ENCODE measurements at regions of chr17 and their contacts with region 1.

Region 1: DNA sequence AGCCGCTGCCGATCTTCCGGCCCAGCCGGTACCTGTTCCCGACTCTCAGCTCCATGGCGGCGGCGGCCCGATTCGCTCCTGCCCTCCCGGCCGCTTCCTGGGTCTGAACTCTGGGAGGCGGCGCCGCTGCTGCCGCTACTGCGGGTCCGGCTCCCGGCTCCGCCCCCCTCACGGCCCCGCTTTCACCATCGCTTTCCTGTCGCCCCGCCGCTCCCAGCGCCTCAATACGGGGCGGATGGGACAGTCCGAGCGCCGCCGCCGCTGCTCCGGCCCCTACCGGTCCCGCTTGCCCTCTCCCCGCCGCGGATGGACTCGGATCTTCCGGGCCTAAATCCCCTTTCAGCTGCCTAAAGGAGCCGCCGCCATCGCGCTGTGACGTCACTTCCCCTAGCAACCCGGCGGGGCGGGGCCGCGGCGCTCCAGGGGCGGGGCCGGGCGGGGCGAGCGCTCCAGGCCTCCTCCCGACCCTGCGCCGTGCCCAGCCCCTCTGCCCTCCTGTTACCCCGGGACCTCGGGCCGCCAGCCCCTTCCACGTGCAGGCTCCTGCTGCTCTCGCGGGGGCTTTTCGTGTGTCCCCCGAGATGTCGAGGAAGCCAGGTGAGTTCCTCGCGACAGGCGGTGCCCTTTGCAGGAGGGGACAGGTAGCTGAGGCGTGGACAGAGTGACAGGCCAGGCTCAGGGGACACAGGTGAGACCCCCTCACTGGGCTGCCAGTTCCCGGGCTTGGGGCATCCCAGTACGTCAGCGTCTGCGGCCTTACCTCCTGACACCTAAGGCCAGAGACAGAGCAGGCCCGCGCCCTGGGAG is at the start of gene CSNK1D:
- DNase-seq: peak; percentile 96
- ATAC-seq: peak; percentile 81
- H3K4me3 Mint-ChIP-seq: peak within 1 kb of the TSS; percentile 90
- H3K27ac Mint-ChIP-seq: peak within 1 kb of the TSS; percentile 94
- H3K4me1 Mint-ChIP-seq: peaks cover 39% of the 10 kb centered on the region
- H3K27me3 Mint-ChIP-seq: no peaks in the 10 kb centered on the region
- total RNA-seq, gene CSNK1D: 118 to 182 TPM

Region 2: DNA sequence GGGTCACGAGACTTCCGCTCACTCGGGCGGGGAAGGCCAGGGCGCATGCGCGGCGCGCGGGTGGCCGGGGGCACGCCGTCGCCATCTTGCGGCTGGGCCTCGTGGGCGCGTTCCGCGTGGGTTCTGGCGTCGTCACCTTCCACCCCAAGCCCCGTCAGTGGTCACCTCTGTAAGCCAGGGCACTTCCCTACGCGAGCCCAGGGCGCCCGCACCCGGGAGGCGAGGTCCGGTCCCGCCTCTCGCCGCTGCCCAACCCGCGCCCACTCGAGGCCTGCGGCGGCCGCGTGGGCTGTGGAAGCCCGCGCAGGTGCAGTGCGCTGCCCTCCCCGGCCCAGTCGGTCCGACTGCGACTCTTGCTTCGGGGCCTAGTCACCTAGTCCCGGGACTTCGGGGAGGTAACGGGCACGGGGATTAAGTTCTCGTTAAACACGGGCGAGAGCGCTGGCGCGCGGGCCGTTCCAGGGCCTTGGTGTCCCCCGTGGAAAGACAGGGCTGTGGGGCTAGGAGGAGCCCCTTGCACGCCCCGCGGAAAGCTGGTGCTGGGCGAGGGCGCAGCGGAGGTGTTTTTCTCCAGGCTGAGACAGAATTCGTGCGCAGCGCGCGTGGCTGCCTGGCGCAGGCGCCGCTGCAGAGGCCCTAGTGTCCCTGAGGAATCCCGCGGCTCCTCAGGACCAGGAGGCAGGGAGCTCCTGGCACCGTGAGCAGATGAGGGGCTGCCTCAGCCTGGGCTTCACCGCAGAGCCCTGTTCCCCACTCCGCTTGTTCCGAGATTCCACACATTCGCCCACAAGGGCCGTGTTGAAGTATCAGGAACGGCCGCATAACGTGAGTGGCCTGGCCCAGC is 401.9 kb before region 1 on chr17:
- CTCF ChIA-PET with region 1: no interaction called
- POLR2A ChIA-PET with region 1: no interaction called
- intact Hi-C with region 1: no loop called
- DNase-seq: peak; percentile 98
- ATAC-seq: no peak
- H3K4me3 Mint-ChIP-seq: peak overlapping the region; percentile 81
- H3K27ac Mint-ChIP-seq: peak overlapping the region; percentile 92
- H3K4me1 Mint-ChIP-seq: peaks cover 34% of the 10 kb centered on the region
- H3K27me3 Mint-ChIP-seq: no peaks in the 10 kb centered on the region

Region 3: DNA sequence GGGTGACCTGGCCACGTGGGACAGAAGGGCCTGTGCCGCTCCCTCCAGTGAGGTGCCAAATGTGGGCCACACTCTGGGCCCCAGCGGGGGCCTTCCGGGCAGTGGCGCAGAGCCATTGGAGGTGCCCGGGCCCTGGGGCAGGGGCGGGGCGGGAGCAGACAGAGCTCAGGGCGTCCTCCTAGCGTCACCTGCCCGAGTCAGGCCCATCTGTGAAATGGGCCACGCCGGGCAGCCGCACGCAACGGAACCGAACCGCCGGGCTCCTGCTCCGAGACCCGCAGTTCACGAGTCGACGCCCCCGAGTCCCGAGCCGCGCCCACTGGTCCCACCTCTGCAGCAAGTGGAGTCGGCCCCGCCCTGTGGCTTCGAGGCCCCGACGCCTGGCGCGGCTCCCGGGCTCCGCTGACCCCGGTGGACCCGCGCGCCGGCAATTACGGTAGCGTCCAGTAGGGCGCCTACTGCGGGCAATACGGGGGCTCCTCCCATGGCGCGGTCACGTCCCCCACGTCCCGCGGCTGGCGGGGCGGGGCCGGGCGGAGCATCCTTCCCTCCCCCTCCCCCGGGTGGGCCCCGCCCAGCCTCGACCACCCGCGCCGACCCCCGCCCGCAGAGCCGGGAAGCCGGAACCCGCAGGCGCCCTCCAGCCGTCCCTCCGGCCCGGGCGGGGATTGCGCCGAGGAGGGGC is 42.8 kb before region 1 on chr17:
- CTCF ChIA-PET with region 1: no interaction called
- POLR2A ChIA-PET with region 1: no interaction called
- intact Hi-C with region 1: loop called in 1 of 2 experiments (anchors 1 kb)
- DNase-seq: peak; percentile 85
- ATAC-seq: peak; percentile 45
- H3K4me3 Mint-ChIP-seq: peak overlapping the region; percentile 79
- H3K27ac Mint-ChIP-seq: peak overlapping the region; percentile 75
- H3K4me1 Mint-ChIP-seq: peaks cover 9% of the 10 kb centered on the region
- H3K27me3 Mint-ChIP-seq: no peaks in the 10 kb centered on the region

Region 4: GRCh38 chr17:82236142-82236981 is 37.2 kb before region 1 on chr17:
- CTCF ChIA-PET with region 1: interaction called, 4 read pairs
- POLR2A ChIA-PET with region 1: no interaction called
- intact Hi-C with region 1: loop called in 1 of 2 experiments (anchors 1 kb)
- DNase-seq: peak; percentile 85
- ATAC-seq: peak; percentile 25
- H3K4me3 Mint-ChIP-seq: no peak overlapping the region
- H3K27ac Mint-ChIP-seq: no peak overlapping the region
- H3K4me1 Mint-ChIP-seq: peaks cover 46% of the 10 kb centered on the region
- H3K27me3 Mint-ChIP-seq: no peaks in the 10 kb centered on the region

Region 5: GRCh38 chr17:82257473-82257872 is 16.1 kb before region 1 on chr17:
- CTCF ChIA-PET with region 1: no interaction called
- POLR2A ChIA-PET with region 1: no interaction called
- intact Hi-C with region 1: loop called in 1 of 2 experiments (anchors 1 kb)
- DNase-seq: peak; percentile 81
- ATAC-seq: peak; percentile 98
- H3K4me3 Mint-ChIP-seq: no peak overlapping the region
- H3K27ac Mint-ChIP-seq: peak overlapping the region; percentile 83
- H3K4me1 Mint-ChIP-seq: peaks cover 24% of the 10 kb centered on the region
- H3K27me3 Mint-ChIP-seq: no peaks in the 10 kb centered on the region

Region 6: GRCh38 chr17:82292251-82293154 is 19.0 kb after region 1 on chr17:
- CTCF ChIA-PET with region 1: interaction called, 4 read pairs
- POLR2A ChIA-PET with region 1: interaction called, 12 read pairs
- intact Hi-C with region 1: loop called (anchors 1 to 2 kb)
- DNase-seq: peak; percentile 96
- ATAC-seq: peak; percentile 89
- H3K4me3 Mint-ChIP-seq: peak overlapping the region; percentile 78
- H3K27ac Mint-ChIP-seq: peak overlapping the region; percentile 85
- H3K4me1 Mint-ChIP-seq: peaks cover 71% of the 10 kb centered on the region
- H3K27me3 Mint-ChIP-seq: no peaks in the 10 kb centered on the region

Region 7: GRCh38 chr17:82297714-82298537 is 24.4 kb after region 1 on chr17:
- CTCF ChIA-PET with region 1: interaction called, 4 read pairs
- POLR2A ChIA-PET with region 1: interaction called, 12 read pairs
- intact Hi-C with region 1: loop called (anchors 1 to 2 kb)
- DNase-seq: peak; percentile 96
- ATAC-seq: peak; percentile 62
- H3K4me3 Mint-ChIP-seq: peak overlapping the region; percentile 80
- H3K27ac Mint-ChIP-seq: peak overlapping the region; percentile 100
- H3K4me1 Mint-ChIP-seq: peaks cover 70% of the 10 kb centered on the region
- H3K27me3 Mint-ChIP-seq: no peaks in the 10 kb centered on the region